Aorta (tissue), 5 donors: ENCODE measurements at regions of chr18 and their contacts with region 1.

Region 1: DNA sequence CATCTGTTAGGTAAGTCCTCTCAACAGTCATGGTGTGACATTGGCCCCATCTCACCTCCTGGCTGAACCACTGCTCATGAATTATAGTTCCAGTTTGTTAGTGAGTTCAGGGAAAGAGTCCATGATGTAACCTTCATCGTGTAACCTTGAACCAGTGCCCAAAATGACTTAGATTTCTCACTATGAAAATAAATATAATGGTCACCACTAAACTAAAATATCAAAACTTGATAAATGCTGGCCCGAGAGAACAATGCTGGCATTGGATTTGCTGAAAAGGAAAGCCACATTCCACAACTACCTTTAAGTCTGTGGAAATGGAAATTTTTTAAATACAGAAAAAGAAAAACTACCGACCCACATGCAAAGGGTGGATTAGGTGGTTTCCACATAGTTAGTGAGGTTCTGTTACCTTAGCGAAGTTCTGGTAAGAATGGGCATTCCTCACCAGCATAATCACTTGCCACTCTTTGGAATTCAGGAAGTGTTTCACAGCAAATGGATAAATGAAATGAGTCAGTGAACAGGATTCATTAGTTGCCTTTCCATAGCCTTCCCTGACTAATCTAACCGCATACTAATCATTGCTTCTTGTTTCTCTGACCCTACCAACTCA is 133.9 kb upstream of the CTAGE1 start:
- DNase-seq: no peak
- ATAC-seq: peak; percentile 63
- H3K4me3 ChIP-seq: no peak overlapping the region
- H3K27ac ChIP-seq: peak overlapping the region; percentile 28 to 66
- H3K4me1 ChIP-seq: peaks cover 2 to 8% of the 10 kb centered on the region in 2 donors
- H3K27me3 ChIP-seq: no peaks in the 10 kb centered on the region

Region 2: DNA sequence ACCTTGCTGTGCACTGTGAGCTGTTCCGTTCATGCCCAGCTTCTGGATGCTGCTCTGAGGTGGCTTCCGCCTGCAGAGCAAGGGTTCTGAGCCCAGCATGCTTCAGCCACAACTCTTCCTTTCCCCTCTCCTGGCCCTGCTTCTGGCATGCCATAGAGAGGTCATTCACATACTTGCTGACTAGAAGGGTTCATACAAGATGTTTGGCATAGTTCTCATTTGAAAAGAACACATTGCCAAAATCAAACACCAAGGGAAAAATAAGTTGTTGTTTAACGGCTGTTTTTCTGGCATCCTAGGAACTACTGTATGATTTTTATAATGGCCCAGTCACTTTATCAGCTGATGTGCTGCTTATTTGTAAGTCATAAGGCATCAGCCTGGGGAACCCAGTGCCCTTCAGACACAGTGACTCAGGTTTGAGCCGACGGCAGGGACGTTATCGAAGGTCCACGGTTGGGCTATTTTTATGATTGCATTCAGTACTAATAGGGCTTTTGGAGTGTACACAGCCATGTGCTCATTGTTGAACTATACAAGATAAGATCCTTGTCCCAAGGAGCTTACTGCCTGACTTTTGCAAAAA is 80.0 kb before region 1 on chr18:
- intact Hi-C with region 1: loop called (anchors 2 kb)
- DNase-seq: peak in 1 of 2 donors; percentile 75
- ATAC-seq: peak; percentile 64
- H3K4me3 ChIP-seq: no peak overlapping the region
- H3K27ac ChIP-seq: peak overlapping the region; percentile 20 to 99
- H3K4me1 ChIP-seq: peaks cover under 1 to 10% of the 10 kb centered on the region in 2 donors
- H3K27me3 ChIP-seq: no peaks in the 10 kb centered on the region

Region 3: DNA sequence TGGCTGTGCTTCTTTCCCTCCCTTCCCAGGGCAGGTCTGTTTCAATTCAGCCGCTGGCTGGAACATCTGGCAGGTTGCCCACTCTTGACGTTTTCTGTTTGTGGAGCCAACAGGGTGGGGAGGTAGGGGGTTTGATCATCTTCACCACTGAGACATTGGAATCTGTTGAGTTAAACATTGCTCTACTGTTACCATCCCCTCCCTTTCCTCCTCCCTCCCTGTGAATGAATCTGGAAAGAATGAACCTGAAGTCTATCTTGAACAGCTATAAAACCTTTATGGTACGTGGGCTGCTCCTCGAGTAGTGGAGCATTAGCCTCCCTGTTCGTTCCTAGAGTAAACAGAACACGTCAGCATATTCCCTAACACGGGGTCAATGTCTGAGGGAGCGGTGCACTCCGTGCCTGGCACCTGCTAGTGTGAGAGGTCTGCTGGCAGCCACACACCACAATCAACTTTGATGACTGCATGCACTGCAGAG is 131.6 kb after region 1 on chr18:
- intact Hi-C with region 1: no loop called
- DNase-seq: peak; percentile 65 to 83
- ATAC-seq: peak; percentile 73
- H3K4me3 ChIP-seq: no peak overlapping the region
- H3K27ac ChIP-seq: no peak overlapping the region
- H3K4me1 ChIP-seq: peaks cover 0 to 2% of the 10 kb centered on the region in 2 donors
- H3K27me3 ChIP-seq: no peaks in the 10 kb centered on the region

Region 4: DNA sequence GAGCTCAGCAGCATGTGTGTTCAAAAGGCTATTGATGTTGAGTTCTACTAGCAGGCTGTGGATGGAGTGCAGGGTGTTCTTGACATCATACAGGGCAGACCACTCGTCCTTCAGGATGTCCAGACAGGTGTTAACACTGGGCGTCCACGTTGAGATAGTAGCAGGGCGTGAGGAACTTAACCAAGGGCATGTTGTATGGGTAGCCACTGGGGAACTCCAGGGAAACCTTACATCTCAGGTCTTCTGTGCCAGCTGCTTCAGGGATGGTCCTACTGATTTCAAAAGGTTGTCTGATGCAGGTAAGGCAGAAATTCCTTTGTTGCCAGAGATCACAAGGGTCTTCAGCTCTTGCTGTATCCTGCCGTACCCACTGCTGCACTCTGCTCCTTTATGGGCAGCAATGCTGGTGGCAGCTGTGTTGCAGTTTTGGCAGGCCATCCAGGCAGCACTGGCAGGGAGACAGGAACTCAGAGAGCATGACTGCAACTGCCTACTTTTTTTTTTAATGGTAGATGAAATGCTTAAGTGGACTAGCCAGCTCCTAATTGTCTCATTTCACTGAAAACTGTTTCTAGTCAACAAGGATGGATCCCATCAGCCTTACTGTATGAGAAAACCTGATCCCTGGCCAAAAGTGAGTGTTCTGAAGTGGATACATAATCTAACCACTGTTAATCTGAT is 349.1 kb after region 1 on chr18:
- intact Hi-C with region 1: no loop called
- DNase-seq: no peak
- ATAC-seq: no peak
- H3K4me3 ChIP-seq: no peak overlapping the region
- H3K27ac ChIP-seq: no peak overlapping the region
- H3K4me1 ChIP-seq: no peaks in the 10 kb centered on the region
- H3K27me3 ChIP-seq: no peaks in the 10 kb centered on the region